AG04450 (cell line): ENCODE measurements at regions of chr2 and their contacts with region 1.

Region 1: GRCh38 chr2:207540431-207540830 is 10.7 kb downstream of the CREB1 start:
- DNase-seq: no peak
- H3K4me3 ChIP-seq: no peak overlapping the region
- H3K27ac ChIP-seq: no peak overlapping the region
- H3K27me3 ChIP-seq: no peaks in the 10 kb centered on the region
- CTCF ChIP-seq: no peak

Region 2: GRCh38 chr2:207254591-207255464 is 285.6 kb before region 1 on chr2:
- CTCF ChIA-PET with region 1: no interaction called
- POLR2A ChIA-PET with region 1: no interaction called
- DNase-seq: no peak
- H3K4me3 ChIP-seq: no peak overlapping the region; the same call in 1 of the 2 replicates
- H3K27ac ChIP-seq: peak overlapping the region; percentile 97
- H3K27me3 ChIP-seq: no peaks in the 10 kb centered on the region
- CTCF ChIP-seq: no peak

Region 3: GRCh38 chr2:207516206-207516605 is 24.2 kb before region 1 on chr2:
- CTCF ChIA-PET with region 1: no interaction called
- POLR2A ChIA-PET with region 1: no interaction called
- DNase-seq: no peak
- H3K4me3 ChIP-seq: no peak overlapping the region
- H3K27ac ChIP-seq: no peak overlapping the region
- H3K27me3 ChIP-seq: no peaks in the 10 kb centered on the region
- CTCF ChIP-seq: no peak

Region 4: DNA sequence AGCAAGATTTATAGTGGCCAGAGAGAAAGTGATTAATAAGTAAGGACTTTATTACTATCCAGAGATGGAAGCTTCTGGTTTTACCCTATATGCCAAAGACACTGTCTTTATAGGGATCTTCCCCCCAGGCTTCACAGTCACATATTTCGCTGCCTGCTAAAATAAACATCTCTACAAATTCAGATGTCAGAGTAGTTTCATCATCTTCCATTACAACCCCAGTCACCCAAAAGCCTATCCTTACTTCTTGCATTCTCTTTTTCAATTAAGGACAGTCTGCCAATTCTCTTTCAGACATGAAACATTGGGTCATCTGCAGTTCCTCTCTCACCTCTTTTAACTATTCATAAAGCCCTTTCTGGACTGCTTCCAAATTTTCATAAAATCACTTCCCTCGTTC is 17.7 kb after region 1 on chr2:
- CTCF ChIA-PET with region 1: no interaction called
- POLR2A ChIA-PET with region 1: interaction called, 15 read pairs
- DNase-seq: peak; percentile 51
- H3K4me3 ChIP-seq: no peak overlapping the region
- H3K27ac ChIP-seq: peak overlapping the region; percentile 41
- H3K27me3 ChIP-seq: no peaks in the 10 kb centered on the region
- CTCF ChIP-seq: no peak